Activated CD4-positive, alpha-beta memory T cell treated with anti-CD3 and anti-CD28 coated beads for 36 hours (primary cell): ENCODE measurements at regions of chr10 and their contacts with region 1.

Region 1: GRCh38 chr10:116287906-116288501 is 15.0 kb upstream of the GFRA1 start:
- DNase-seq: no peak
- H3K4me3 Mint-ChIP-seq: no peak overlapping the region
- H3K27ac Mint-ChIP-seq: no peak overlapping the region
- H3K4me1 Mint-ChIP-seq: no peaks in the 10 kb centered on the region
- H3K27me3 Mint-ChIP-seq: peaks cover 2% of the 10 kb centered on the region

Region 2: DNA sequence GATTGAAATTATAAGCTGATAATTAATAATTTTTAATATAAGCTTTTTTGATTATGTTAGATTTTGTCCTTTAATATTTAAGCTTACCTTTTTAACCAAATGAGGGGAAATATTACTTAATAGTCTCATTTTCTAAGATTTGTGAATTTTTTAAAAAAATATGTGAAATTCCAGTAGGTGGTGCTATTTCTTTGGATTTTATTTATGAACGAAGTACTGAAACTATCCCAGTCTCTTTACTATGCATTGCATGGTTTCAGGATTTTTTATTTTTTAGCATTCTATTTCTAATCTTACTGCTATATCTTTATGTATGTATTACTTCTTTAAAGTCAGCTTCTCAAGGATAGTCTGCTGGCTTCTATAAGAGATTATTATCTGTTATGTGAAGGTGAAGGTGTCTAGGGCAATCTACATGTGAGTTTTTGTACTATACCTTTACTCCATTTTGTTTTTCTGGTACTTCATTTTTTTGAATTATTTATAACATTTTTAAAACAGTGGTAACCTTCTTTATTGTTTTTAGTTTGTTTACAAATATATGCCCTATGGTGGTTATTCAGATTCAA is 1116.5 kb before region 1 on chr10:
- CTCF ChIA-PET with region 1: no interaction called
- POLR2A ChIA-PET with region 1: no interaction called
- intact Hi-C with region 1: loop called (anchors 5 kb)
- DNase-seq: no peak
- H3K4me3 Mint-ChIP-seq: no peak overlapping the region
- H3K27ac Mint-ChIP-seq: no peak overlapping the region
- H3K4me1 Mint-ChIP-seq: no peaks in the 10 kb centered on the region
- H3K27me3 Mint-ChIP-seq: no peaks in the 10 kb centered on the region

Region 3: DNA sequence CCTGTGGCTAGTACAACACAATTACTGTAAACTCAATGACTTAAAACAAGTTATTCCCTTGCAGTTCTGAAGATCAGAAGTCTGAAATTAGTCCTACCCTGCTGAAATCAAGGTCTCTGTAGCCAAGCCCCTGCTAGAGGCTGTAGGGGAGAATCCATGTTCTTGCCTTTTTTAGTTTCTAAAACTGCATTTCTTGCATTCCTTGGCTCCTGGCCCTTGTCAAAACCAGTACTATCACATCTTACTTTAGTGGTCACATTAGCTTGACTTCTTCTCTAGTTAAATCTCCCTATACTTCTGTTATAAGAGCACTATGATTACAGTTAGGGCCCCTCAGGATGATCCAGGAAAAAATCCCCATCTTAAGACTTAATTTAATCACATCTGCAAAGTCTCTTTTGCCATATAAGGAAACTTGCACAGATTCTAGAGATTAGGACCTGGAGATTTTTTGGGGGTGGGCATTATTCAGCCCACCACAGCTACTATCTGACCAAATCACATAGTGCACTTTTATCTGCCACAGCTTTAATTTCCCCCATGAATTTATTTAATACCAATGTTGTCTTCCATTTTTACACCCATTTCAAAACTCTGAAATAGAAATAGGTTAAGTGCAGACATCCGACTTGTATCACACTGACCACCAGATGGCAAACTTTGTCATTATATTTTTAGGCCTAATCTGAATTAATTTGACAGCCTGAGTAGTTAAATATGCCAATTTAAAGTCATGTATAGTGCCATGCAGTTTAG is 581.8 kb before region 1 on chr10:
- CTCF ChIA-PET with region 1: interaction called, 6 read pairs
- POLR2A ChIA-PET with region 1: no interaction called
- intact Hi-C with region 1: loop called (anchors 2 kb)
- DNase-seq: no peak
- H3K4me3 Mint-ChIP-seq: no peak overlapping the region
- H3K27ac Mint-ChIP-seq: no peak overlapping the region
- H3K4me1 Mint-ChIP-seq: no peaks in the 10 kb centered on the region
- H3K27me3 Mint-ChIP-seq: no peaks in the 10 kb centered on the region

Region 4: DNA sequence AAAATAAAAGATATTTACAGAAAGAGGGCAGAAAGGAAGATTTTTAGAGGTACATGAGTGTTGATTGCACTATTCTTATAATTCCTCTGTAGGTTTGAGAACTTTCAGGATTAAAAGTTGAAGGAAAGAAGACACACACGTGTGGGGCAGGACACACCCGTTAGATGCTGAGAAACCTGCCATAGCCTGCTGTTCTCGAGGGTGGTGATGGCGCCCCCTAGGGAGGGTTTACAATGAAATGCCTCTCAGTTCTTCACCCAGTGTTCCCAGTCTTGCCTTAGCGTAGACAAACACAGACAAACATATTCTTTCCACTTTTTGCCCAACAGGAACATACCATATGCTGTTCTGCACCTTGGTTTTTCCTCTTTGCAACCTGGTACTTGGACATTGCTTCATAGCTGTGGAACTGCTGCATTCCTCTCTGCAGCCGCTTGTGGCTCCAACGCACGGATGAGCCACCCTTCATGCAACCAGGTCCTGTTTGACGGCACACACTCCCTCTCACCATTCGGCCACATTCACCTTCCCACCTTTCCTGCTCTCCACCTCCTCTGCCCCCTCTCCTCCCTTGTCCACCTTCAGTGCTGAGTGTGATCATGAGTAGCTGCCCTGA is 477.7 kb after region 1 on chr10:
- CTCF ChIA-PET with region 1: no interaction called
- POLR2A ChIA-PET with region 1: no interaction called
- intact Hi-C with region 1: no loop called
- DNase-seq: peak; percentile 58
- H3K4me3 Mint-ChIP-seq: no peak overlapping the region
- H3K27ac Mint-ChIP-seq: no peak overlapping the region
- H3K4me1 Mint-ChIP-seq: no peaks in the 10 kb centered on the region
- H3K27me3 Mint-ChIP-seq: peaks cover 52% of the 10 kb centered on the region